Activated CD4-positive, alpha-beta T cell treated with anti-CD3 and anti-CD28 coated beads, Interleukin-2, amount 10 ng/mL, durations not matched to agents 24 days and 14 days (primary cell): ENCODE measurements at regions of chr22 and their contacts with region 1.

Region 1: GRCh38 chr22:42780070-42780540 is 59.4 kb upstream of the A4GALT start:
- DNase-seq: peak; percentile 87
- H3K4me3 Mint-ChIP-seq: no peak overlapping the region
- H3K27ac Mint-ChIP-seq: no peak overlapping the region
- H3K4me1 Mint-ChIP-seq: no peaks in the 10 kb centered on the region
- H3K27me3 Mint-ChIP-seq: no peaks in the 10 kb centered on the region

Region 2: GRCh38 chr22:42475122-42475521 is 305.0 kb before region 1 on chr22:
- intact Hi-C with region 1: no loop called
- DNase-seq: no peak
- H3K4me3 Mint-ChIP-seq: no peak overlapping the region
- H3K27ac Mint-ChIP-seq: no peak overlapping the region
- H3K4me1 Mint-ChIP-seq: peaks cover 8% of the 10 kb centered on the region
- H3K27me3 Mint-ChIP-seq: peaks cover 23% of the 10 kb centered on the region

Region 3: GRCh38 chr22:42820066-42820763 is 40.1 kb after region 1 on chr22:
- intact Hi-C with region 1: loop called (anchors 5 kb)
- DNase-seq: no peak
- H3K4me3 Mint-ChIP-seq: no peak overlapping the region
- H3K27ac Mint-ChIP-seq: no peak overlapping the region
- H3K4me1 Mint-ChIP-seq: peaks cover 4% of the 10 kb centered on the region
- H3K27me3 Mint-ChIP-seq: no peaks in the 10 kb centered on the region

Region 4: DNA sequence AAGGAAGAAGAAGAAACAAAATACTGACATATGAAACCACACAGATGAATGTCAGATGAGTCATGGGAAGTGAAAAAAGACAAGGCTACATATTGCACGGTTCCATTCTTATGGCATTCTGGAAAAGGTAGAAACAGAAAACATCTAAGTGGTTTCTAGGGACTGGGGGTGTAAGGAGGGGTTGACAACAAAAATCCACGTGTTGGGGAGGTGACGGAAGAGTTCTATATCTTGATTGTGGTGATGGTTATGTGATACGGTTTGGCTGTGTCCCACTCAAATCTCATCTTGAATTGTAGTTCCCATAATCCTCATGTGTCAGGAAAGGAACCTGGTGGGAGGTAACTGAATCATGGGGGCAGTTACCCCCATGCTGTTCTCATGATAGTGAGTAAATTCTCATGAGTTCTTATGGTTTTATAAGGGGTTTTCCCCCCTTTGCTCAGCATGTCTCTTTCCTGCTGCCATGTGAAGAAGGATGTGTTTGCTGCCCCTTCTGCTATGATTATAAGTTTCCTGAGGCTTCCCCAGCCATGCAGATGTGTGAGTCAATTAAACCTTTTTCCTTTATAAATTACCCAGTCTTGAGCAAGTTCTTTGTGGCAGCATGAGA is 83.3 kb after region 1 on chr22:
- intact Hi-C with region 1: loop called (anchors 2 kb)
- DNase-seq: peak; percentile 62
- H3K4me3 Mint-ChIP-seq: peak overlapping the region; percentile 13
- H3K27ac Mint-ChIP-seq: peak overlapping the region; percentile 91
- H3K4me1 Mint-ChIP-seq: peaks cover 12% of the 10 kb centered on the region
- H3K27me3 Mint-ChIP-seq: peaks cover 5% of the 10 kb centered on the region

Region 5: GRCh38 chr22:43035232-43035631 is 255.1 kb after region 1 on chr22:
- intact Hi-C with region 1: loop called (anchors 2 kb)
- DNase-seq: no peak
- H3K4me3 Mint-ChIP-seq: no peak overlapping the region
- H3K27ac Mint-ChIP-seq: no peak overlapping the region
- H3K4me1 Mint-ChIP-seq: peaks cover 2% of the 10 kb centered on the region
- H3K27me3 Mint-ChIP-seq: no peaks in the 10 kb centered on the region

Region 6: DNA sequence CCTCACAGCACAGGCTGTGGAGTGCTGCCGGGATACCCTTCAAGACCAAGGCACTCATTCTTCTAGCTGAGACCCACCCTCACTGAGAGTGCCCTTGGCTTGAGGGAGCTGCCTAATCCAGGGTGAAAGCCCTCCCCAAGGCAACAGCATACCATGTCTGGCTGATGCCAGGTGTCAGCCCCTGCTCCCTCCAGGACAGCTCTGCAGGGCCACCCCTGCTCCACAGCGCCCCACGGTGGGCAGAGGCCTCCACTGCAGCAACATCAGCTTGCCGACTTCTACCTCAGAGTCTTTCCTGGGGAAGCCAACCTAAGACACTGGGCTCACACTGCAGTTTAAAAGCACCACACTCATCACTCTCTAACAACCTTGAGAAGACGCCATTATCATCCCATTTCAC is 280.1 kb after region 1 on chr22:
- intact Hi-C with region 1: loop called (anchors 1 kb)
- DNase-seq: peak; percentile 83
- H3K4me3 Mint-ChIP-seq: no peak overlapping the region
- H3K27ac Mint-ChIP-seq: no peak overlapping the region
- H3K4me1 Mint-ChIP-seq: no peaks in the 10 kb centered on the region
- H3K27me3 Mint-ChIP-seq: no peaks in the 10 kb centered on the region

Region 7: GRCh38 chr22:43088979-43089717 is 309.0 kb after region 1 on chr22 and contains the start of gene TTLL1:
- intact Hi-C with region 1: loop called (anchors 1 kb)
- DNase-seq: peak; percentile 97
- H3K4me3 Mint-ChIP-seq: peak within 1 kb of the TSS; percentile 91
- H3K27ac Mint-ChIP-seq: peak within 1 kb of the TSS; percentile 93
- H3K4me1 Mint-ChIP-seq: peaks cover 23% of the 10 kb centered on the region
- H3K27me3 Mint-ChIP-seq: no peaks in the 10 kb centered on the region
- total RNA-seq, gene TTLL1: 2.6 TPM in 2 replicates